ENCODE measurements at regions of chr1 and their contacts with region 1.

Region 1: GRCh38 chr1:64136752-64137411 is 66.5 kb upstream of the UBE2U start:
- DNase-seq: no peak
- H3K4me3 ChIP-seq: no peak overlapping the region
- H3K27ac ChIP-seq: peak overlapping the region in 1 of 4 donors; percentile 6
- H3K4me1 ChIP-seq: peaks cover 9 to 34% (median 10%) of the 10 kb centered on the region in 3 donors
- H3K27me3 ChIP-seq: no peaks in the 10 kb centered on the region
- CTCF ChIP-seq: peak; percentile 58 to 91 (median 90)
- POLR2A ChIP-seq: no peak

Region 2: DNA sequence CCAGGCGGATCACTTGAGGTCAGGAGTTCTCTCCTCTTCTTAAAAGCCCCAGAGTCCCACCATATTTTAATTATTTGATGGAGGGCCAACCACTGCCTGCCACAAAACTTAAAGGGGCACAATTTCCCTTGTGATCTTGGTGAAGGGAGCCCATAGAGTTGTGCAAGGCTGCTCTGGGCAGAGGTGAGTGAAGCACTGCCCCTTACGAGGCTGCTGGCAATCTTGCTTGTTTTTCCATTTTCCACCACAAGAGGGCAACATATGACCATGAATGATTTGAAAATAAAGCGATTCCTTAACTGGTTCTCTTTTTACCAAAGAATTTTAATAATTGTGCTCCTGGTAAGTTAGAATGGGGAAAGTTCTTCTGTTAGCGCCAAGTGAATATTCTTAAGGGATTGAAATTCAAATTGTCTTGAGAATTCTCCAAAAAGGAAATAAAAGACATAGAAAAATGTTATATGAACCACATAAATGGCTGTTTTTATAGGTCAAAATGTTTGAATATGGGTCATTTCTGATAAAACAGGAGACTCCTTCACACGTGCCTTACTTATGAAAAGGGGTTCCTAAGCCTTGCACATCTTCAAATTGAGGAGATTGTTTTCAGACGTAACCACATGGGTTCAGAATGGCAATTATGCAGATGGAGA is 521.0 kb before region 1 on chr1:
- intact Hi-C with region 1: loop called (anchors 10 kb)
- DNase-seq: no peak
- H3K4me3 ChIP-seq: no peak overlapping the region
- H3K27ac ChIP-seq: no peak overlapping the region
- H3K4me1 ChIP-seq: peaks cover 0 to 17% (median 11%) of the 10 kb centered on the region in 3 donors
- H3K27me3 ChIP-seq: no peaks in the 10 kb centered on the region
- CTCF ChIP-seq: peak; percentile 82 to 88 (median 84)
- POLR2A ChIP-seq: no peak

Region 3: GRCh38 chr1:63691701-63692425 is 445.0 kb before region 1 on chr1:
- intact Hi-C with region 1: loop called (anchors 10 kb)
- DNase-seq: no peak
- H3K4me3 ChIP-seq: no peak overlapping the region
- H3K27ac ChIP-seq: peak overlapping the region in 3 of 4 donors; percentile 1 to 77 (median 73)
- H3K4me1 ChIP-seq: peaks cover 0 to 39% (median 9%) of the 10 kb centered on the region in 3 donors
- H3K27me3 ChIP-seq: no peaks in the 10 kb centered on the region
- CTCF ChIP-seq: peak; percentile 40 to 83 (median 74)
- POLR2A ChIP-seq: no peak

Region 4: GRCh38 chr1:63773815-63774616 is 362.9 kb before region 1 on chr1 and contains the start of gene ROR1:
- intact Hi-C with region 1: loop called (anchors 10 kb)
- DNase-seq: no peak
- H3K4me3 ChIP-seq: peak within 1 kb of the TSS; percentile 74 to 88 (median 77)
- H3K27ac ChIP-seq: peak within 1 kb of the TSS; percentile 84 to 92 (median 90)
- H3K4me1 ChIP-seq: peaks cover 12 to 49% (median 22%) of the 10 kb centered on the region in 3 donors
- H3K27me3 ChIP-seq: peaks cover 0 to 52% (median 0%) of the 10 kb centered on the region in 4 donors
- CTCF ChIP-seq: peak; percentile 36 to 73 (median 65)
- POLR2A ChIP-seq: peak in 2 of 4 donors; percentile 37 to 40
- total RNA-seq, gene ROR1: 6.6 to 15.3 (median 9.4) TPM

Region 5: DNA sequence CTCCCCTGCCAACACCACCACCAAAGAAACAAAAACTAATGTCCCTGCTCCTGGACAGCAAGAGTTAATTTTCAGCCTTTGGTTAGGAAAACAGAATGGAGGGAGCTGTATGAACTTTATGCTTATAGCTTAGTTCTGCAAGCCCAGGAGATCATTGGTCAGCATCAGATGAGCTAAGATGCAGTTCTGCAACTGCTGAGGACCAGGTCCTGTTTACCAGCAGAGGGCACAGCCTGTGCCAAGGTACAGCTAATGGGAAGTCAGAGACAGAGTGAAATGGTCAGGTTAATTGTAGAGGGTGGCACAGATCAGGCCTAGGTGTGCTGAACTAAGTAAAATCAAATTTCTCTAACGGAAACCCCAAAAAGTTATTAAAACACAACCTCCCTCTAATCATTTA is 201.7 kb before region 1 on chr1:
- intact Hi-C with region 1: loop called (anchors 10 kb)
- DNase-seq: no peak
- H3K4me3 ChIP-seq: no peak overlapping the region
- H3K27ac ChIP-seq: no peak overlapping the region
- H3K4me1 ChIP-seq: peaks cover 0 to 6% (median 0%) of the 10 kb centered on the region in 3 donors
- H3K27me3 ChIP-seq: no peaks in the 10 kb centered on the region
- CTCF ChIP-seq: peak in 5 of 6 experiments; percentile 5 to 47 (median 20)
- POLR2A ChIP-seq: no peak

Measured in esophagus squamous epithelium (tissue), 5 donors.